Panc1 (cell line): ENCODE measurements at regions of chr3 and their contacts with region 1.

Region 1: DNA sequence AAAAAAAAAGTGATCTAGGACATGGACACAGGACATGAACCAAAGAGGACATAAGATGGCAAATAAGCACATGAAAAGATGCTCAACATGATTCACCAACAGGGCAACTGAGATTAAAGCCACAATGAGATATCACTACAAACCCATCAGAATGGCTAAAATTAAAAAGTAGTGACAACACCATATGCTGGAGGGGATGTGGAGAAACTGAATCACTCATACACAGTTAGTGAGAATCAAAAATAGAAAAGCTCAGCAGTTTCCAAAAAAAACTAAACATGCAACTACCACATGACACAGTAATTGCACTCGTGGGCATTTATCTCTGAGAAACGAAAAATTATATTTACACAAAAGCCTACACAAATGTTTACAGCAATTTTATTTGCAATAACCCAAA is 27.9 kb upstream of the ACKR4 start:
- DNase-seq: no peak
- ATAC-seq: no peak
- H3K4me3 ChIP-seq: no peak overlapping the region
- H3K27ac ChIP-seq: no peak overlapping the region
- H3K4me1 ChIP-seq: no peaks in the 10 kb centered on the region
- H3K27me3 ChIP-seq: no peaks in the 10 kb centered on the region
- CTCF ChIP-seq: no peak

Region 2: GRCh38 chr3:132595014-132595413 is 25.9 kb after region 1 on chr3:
- CTCF ChIA-PET with region 1: no interaction called
- POLR2A ChIA-PET with region 1: no interaction called
- in situ Hi-C with region 1: no loop called
- intact Hi-C with region 1: loop called (anchors 1 kb)
- DNase-seq: no peak
- ATAC-seq: no peak
- H3K4me3 ChIP-seq: no peak overlapping the region
- H3K27ac ChIP-seq: no peak overlapping the region
- H3K4me1 ChIP-seq: no peaks in the 10 kb centered on the region
- H3K27me3 ChIP-seq: no peaks in the 10 kb centered on the region
- CTCF ChIP-seq: no peak

Region 3: DNA sequence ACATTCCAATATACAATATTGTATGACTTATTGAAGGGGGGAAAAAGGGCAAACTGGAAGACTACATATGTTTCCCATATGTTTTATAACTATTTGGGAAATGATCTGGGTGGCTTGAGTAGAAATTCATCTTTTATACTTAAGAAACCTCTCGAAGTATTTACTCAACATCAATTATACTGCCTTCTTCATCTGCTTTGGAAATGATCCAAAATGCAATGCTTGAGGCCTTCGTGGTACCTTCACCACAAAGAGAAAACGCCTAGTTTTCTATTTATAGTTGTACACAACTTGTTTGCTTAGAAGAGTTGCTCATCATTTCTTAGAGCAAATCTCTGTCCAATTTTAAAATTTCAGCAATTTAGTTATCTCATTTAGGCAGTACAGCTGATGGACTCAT is 46.7 kb after region 1 on chr3:
- CTCF ChIA-PET with region 1: no interaction called
- POLR2A ChIA-PET with region 1: no interaction called
- in situ Hi-C with region 1: no loop called
- intact Hi-C with region 1: no loop called
- DNase-seq: no peak
- ATAC-seq: no peak
- H3K4me3 ChIP-seq: no peak overlapping the region
- H3K27ac ChIP-seq: no peak overlapping the region
- H3K4me1 ChIP-seq: no peaks in the 10 kb centered on the region
- H3K27me3 ChIP-seq: no peaks in the 10 kb centered on the region
- CTCF ChIP-seq: no peak

Region 4: DNA sequence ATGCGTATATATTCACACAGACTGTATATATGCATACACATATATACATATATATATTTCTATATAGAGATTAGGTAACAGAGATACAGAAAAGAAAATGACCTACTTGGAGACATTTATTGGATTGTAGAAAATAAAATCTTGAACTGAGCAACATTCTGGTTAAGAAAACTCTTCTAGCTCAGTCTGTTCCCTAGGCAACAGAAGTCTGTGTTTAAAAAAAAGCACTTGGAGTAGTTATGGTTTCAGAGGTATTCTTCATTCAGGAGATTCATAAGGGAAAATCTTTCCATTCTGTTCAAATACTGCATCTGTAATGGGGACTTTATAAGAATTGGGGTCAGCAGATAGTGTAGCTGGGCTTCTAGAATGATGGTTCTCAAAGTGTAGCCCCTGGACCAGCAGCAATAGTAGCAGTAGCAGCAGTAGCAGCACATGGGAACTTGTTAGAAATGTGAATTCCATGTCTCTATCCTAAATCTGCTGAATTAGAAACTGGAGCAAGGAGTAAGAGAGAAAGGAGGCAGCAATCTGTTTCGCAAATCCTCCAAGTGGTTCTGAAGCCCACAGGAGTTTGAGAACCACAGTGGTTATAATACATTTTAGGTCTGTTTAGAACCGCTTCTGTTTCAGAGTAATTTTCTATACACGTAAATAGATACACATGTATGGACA is 356.2 kb after region 1 on chr3:
- CTCF ChIA-PET with region 1: no interaction called
- POLR2A ChIA-PET with region 1: no interaction called
- in situ Hi-C with region 1: no loop called
- intact Hi-C with region 1: no loop called
- DNase-seq: no peak
- ATAC-seq: no peak
- H3K4me3 ChIP-seq: no peak overlapping the region
- H3K27ac ChIP-seq: no peak overlapping the region
- H3K4me1 ChIP-seq: no peaks in the 10 kb centered on the region
- H3K27me3 ChIP-seq: peaks cover 8% of the 10 kb centered on the region
- CTCF ChIP-seq: no peak